GM13977 (cell line): ENCODE measurements at regions of chr12 and their contacts with region 1.

Region 1: DNA sequence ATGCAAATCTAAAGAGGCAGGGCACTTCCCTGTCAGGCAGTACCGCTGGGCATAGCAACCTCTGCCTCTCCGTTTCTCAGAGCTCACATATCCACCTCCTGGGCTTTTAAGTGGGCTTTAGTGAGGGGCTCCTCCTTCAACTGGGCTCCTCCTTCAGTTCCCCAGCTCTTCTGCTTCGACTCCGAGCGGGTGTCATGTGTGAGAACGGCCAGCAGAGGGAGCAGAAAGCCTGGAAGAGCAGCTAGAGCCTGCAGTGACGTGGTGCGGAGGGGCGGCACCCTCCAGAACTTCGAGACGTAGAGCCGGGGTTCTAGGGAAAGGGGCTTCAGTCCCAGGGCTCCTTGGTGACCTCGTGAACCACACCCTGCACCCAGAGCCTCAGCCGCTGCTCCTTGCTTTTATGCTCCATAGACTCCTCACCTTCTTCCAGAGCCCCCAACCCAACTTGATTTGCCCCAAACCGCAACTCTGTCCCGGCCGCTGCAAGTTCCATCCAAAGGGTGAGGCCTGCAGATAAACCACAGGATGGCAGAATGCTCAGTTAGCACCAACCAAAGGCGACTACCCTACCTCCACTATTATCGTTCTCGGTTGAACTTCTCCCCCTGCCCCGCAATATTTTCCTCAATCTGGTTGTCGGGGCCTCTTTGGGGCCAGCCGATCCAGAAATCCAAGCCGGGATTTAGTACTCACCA is 383 bp upstream of the GLI1 start:
- DNase-seq: peak; percentile 88
- CTCF ChIP-seq: peak; percentile 90

Region 2: DNA sequence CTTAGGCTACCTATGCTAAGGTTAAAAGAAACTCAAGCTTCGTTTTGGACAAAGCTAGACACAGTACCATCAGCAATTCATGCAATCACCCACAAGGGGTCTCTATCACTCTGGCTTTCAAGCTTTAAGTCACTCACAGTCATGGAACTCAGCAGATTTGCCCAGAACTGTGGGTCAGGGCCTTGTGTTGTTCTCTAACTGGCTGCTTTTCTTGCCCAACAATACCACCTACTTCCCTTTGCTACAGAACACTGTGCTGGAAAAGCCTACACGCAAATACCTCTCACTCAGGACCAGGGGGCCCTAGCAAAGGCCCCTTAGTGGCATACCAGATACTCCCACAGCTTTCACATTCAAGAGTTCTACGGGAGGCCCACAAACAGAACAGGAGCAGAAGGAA is 389.7 kb before region 1 on chr12:
- in situ Hi-C with region 1: no loop called
- DNase-seq: peak; percentile 54
- CTCF ChIP-seq: peak; percentile 84

Region 3: DNA sequence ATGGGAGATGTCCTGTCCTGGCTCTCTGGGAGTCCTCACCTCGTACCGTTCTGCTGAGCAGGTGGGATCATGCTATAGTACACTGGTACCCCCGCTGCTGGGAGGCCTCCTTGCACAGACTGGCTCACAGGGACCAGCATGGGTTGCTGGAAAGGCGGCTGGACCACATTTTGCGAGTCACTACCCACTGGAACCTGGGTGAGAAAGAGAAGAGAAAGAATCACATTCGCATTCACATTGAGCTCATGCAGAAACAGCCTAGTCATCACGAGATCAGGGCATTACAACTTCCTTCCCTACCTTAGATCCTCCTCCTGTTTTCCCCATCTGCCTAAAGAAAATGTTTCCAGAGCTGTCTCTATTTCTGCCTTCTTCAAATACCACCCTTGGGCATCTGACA is 190.9 kb before region 1 on chr12:
- in situ Hi-C with region 1: loop called (anchors 10 kb)
- DNase-seq: no peak
- CTCF ChIP-seq: no peak

Region 4: DNA sequence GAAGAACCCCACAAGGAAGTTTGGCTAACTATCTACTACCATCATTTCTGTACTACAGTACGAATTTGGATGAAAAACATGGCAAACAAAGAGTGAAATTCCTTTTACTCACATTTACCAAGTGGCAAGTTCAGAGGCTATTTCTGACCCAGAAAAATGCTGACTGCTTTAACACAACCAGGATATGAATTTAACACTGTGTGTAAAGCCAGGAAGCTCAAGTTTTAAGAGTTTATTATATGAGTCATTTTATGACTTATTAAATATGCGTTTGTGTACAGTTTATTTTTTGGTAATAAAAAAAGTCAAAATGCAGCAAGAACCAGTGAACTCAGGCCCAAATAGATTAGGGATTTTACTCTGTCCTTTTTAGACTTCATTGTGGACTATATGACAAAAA is 149.8 kb before region 1 on chr12:
- in situ Hi-C with region 1: loop called (anchors 10 kb)
- DNase-seq: no peak
- CTCF ChIP-seq: no peak

Region 5: DNA sequence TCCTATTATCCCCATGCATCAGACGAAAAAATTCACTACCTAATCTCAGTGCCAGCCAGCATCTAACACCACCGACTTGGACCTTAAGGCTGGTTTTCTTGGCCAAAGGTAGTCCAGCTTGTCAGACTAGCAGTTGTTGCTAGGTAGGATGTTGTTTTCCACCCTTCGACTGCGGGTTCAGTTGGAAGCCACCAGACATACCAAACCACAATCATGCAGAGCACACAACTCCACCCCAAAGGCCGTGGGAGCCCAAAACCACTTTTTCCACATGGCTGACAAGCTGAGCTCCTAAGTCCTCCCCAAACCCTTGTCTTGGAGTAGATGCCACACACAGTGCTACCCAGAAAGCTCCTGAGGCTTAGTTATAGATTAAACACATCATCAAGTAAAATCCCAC is 1414.3 kb after region 1 on chr12:
- in situ Hi-C with region 1: no loop called
- DNase-seq: no peak
- CTCF ChIP-seq: no peak